ENCODE measurements at regions of chr17 and their contacts with region 1.

Region 1: GRCh38 chr17:62109378-62109902 is 44.4 kb upstream of the MED13 start:
- DNase-seq: peak; percentile 85
- ATAC-seq: peak; percentile 98
- H3K4me3 Mint-ChIP-seq: no peak overlapping the region
- H3K27ac Mint-ChIP-seq: no peak overlapping the region
- H3K4me1 Mint-ChIP-seq: peaks cover 9% of the 10 kb centered on the region
- H3K27me3 Mint-ChIP-seq: no peaks in the 10 kb centered on the region
- CTCF ChIP-seq: peak; percentile 51; the same call in 1 of the 2 replicates

Region 2: GRCh38 chr17:61635913-61636432 is 473.5 kb before region 1 on chr17:
- CTCF ChIA-PET with region 1: interaction called, 27 read pairs
- POLR2A ChIA-PET with region 1: no interaction called
- DNase-seq: peak; percentile 49
- ATAC-seq: peak; percentile 38; the same call in 1 of the 2 replicates
- H3K4me3 Mint-ChIP-seq: no peak overlapping the region
- H3K27ac Mint-ChIP-seq: no peak overlapping the region
- H3K4me1 Mint-ChIP-seq: no peaks in the 10 kb centered on the region
- H3K27me3 Mint-ChIP-seq: no peaks in the 10 kb centered on the region
- CTCF ChIP-seq: peak; percentile 54

Region 3: DNA sequence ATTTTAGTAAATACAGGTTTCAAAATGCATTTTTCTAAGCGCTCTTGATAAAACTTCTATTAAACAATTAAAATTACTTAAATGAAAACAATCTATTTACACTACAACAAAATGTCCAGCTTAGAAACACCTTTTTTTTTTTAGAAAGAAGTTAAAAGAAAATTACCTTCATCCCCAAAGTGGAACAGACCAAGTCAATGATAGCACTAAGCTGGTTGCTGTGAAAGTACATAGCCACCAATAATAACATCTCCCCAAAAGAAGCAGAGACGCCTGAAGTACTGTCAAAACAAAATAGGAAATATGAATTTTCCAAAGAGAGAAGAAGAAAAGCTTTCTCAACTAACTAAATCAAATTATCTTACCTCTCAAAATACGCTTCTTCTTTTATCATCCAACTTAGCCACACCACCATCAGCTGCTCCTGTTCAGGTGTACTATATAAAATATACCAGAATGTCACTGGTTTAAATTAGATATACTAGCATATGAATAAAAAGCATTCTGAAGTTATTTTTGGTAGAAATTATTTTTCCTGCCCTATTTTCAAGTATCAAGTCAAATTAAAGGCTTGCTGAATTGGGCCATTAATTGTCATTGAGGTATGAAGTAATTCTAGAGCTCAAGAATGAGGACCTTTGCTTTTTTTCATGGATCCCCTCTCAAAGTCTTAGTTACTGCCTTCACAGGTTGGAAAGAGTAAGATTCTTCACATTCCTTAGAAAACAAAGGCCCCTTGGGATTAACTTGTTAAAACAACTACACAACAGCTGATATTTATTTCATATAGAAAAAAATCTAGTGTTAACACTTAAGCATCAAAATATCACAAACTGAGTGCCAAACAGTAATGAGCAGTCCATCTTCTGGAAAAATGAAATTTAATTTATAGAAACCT is 211.9 kb before region 1 on chr17:
- CTCF ChIA-PET with region 1: interaction called, 11 read pairs
- POLR2A ChIA-PET with region 1: interaction called, 7 read pairs
- DNase-seq: no peak
- ATAC-seq: peak; percentile 41; the same call in 1 of the 2 replicates
- H3K4me3 Mint-ChIP-seq: no peak overlapping the region
- H3K27ac Mint-ChIP-seq: peak overlapping the region; percentile 68; the same call in 1 of the 2 replicates
- H3K4me1 Mint-ChIP-seq: 0 out of 2 replicates have a peak, but pooled peaks cover 4% of the 10 kb centered on the region
- H3K27me3 Mint-ChIP-seq: no peaks in the 10 kb centered on the region
- CTCF ChIP-seq: no peak

Region 4: DNA sequence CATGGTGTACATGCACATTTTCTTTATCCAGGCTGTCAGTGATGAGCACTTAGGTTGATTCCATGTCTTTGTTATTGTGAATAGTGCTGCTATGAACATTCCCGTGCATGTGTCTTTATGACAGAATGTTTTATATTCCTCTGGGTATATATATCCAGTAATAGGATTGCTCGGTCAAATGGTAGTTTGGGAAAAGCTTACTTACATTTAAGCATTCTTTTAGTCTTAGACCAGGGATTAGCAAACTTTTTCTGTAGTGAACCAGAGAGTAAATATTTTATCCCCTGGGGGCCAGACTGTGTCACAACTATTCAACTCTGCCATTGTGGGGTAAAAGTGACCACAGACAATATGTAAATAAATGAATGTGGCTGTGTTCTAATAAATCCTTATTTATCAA is 84.5 kb before region 1 on chr17:
- CTCF ChIA-PET with region 1: interaction called, 10 read pairs
- POLR2A ChIA-PET with region 1: no interaction called
- DNase-seq: no peak
- ATAC-seq: no peak
- H3K4me3 Mint-ChIP-seq: no peak overlapping the region
- H3K27ac Mint-ChIP-seq: no peak overlapping the region
- H3K4me1 Mint-ChIP-seq: peaks cover 17% of the 10 kb centered on the region
- H3K27me3 Mint-ChIP-seq: no peaks in the 10 kb centered on the region
- CTCF ChIP-seq: no peak

Region 5: GRCh38 chr17:62059414-62059813 is 50.0 kb before region 1 on chr17:
- CTCF ChIA-PET with region 1: interaction called, 54 read pairs
- POLR2A ChIA-PET with region 1: no interaction called
- DNase-seq: no peak
- ATAC-seq: no peak
- H3K4me3 Mint-ChIP-seq: no peak overlapping the region
- H3K27ac Mint-ChIP-seq: peak overlapping the region; percentile 40
- H3K4me1 Mint-ChIP-seq: peaks cover 50% of the 10 kb centered on the region
- H3K27me3 Mint-ChIP-seq: no peaks in the 10 kb centered on the region
- CTCF ChIP-seq: no peak

Region 6: DNA sequence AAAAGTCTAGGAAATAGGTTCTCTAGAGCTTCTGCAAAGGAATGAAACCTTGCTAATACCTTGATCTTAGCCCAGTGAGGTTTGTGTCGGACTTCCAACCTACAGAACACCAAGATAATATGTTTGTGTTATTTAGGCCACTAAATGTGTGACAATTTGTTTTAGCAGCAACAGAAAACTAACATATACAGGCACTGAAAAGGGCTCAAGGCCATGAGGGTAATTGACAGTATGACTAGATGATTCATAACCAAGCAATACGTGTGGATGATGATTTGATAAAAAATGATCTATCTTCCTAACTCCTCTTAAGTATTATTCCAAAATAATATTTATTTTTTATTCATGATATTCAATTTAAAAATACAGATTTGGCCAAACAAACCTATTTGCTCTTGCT is 16.7 kb before region 1 on chr17:
- CTCF ChIA-PET with region 1: interaction called, 43 read pairs
- POLR2A ChIA-PET with region 1: no interaction called
- DNase-seq: no peak
- ATAC-seq: no peak
- H3K4me3 Mint-ChIP-seq: no peak overlapping the region
- H3K27ac Mint-ChIP-seq: no peak overlapping the region
- H3K4me1 Mint-ChIP-seq: no peaks in the 10 kb centered on the region
- H3K27me3 Mint-ChIP-seq: no peaks in the 10 kb centered on the region
- CTCF ChIP-seq: no peak